ENCODE measurements at regions of chr2 and their contacts with region 1.

Region 1: DNA sequence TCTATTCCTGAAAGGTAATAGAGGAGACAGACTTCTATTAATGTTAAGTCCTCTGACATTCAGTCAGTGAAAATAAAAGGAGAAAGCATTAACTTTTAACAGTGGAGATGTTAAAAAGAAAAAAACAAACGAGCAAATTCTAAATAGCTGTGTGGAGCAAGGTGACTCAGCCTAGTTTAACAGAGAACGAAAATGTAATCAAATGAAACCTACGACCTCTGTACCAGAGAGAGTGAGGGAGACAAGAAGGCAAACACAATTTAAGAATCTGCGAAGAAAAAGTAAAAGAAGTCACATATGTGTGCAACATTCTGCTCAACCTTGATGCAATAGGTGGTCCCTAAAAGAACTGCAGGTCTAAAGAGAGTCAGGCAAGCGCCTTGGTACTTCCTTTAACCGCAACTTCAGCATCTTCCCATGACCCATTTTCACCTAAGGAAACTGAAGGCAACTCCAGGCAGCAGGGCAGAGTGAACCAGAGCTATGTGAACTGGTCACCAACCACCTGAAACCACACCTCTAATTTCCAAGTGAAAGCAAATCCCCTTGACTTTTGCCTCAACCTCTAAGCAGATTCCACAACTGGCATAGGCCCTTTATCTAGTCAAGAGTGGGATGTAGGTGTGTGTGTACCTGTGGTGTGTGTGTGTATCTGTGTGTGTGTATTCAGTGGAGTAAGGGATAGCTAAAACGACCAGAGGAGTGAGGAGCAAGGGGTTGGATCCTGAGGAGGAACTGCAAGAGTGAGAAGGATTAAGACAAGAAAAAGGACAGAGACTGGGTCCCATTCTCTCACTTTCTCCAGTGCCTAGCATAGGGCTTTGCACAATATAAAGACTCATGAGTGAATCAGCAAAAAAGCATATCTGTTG is 43.0 kb downstream of the FIGN start:
- DNase-seq: no peak
- ATAC-seq: no peak
- H3K4me3 ChIP-seq: no peak overlapping the region
- H3K27ac ChIP-seq: peak overlapping the region; percentile 52 to 67
- H3K4me1 ChIP-seq: peaks cover 5 to 13% of the 10 kb centered on the region in 2 donors
- H3K27me3 ChIP-seq: no peaks in the 10 kb centered on the region

Region 2: DNA sequence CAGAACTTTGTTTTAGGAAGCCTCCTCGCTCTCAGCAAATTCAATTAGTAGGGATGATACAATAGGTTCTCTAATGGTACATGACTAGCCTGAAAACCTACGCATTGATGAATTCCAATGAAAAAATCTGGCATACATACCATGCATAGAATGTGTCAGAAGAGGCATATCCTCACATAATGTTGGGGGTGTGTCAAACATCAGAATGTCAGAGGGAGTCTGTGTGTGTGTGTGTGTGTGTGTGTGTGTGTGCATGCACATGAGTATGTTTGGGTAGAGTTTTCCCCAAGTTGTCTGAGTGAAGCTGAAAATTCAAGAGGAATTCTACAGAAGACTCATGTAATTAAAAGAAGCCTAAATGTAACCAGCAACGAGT is 35.6 kb before region 1 on chr2:
- intact Hi-C with region 1: loop called in 1 of 2 experiments (anchors 5 kb)
- DNase-seq: no peak
- ATAC-seq: no peak
- H3K4me3 ChIP-seq: no peak overlapping the region
- H3K27ac ChIP-seq: peak overlapping the region in 1 of 2 donors; percentile 45
- H3K4me1 ChIP-seq: peaks cover 5 to 11% of the 10 kb centered on the region in 2 donors
- H3K27me3 ChIP-seq: no peaks in the 10 kb centered on the region